CD4-positive, alpha-beta T cell (primary cell): ENCODE measurements at regions of chr17 and their contacts with region 1.

Region 1: DNA sequence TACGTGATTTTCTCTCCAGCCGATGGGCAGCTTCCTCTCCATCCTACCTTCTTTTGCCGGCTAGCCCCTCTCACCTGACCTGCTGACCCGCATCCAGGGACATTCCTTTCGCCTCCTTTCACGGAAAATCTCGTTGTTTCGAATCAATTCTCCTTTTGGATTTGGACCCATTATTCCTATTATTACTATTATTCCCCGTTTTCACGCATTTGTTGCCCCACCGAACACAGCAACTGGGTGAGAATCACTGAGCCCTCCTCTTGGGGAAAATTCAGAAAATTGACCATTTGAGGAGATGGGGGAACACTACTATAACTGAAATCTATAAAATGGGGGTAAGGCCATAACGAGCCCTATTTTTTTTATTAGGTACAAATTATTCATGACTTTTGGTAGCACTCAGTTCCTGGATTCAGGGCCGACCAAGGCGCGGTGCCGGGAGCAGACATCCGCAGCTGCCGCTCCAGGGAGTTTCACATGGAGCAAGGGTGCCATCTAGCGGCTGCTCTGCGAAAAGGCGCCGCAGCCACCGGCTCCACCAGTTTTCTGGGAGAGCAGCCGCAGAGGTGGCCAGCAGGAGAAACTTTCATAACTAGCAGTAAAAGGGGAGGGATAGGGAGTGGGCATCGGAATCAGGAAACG is 3.3 kb upstream of the HOXB8 start:
- DNase-seq: peak; percentile 68 to 91 (median 80)
- ATAC-seq: peak; percentile 75
- H3K4me3 ChIP-seq: no peak overlapping the region
- H3K4me3 Mint-ChIP-seq: peak overlapping the region; percentile 34
- H3K27ac ChIP-seq: no peak overlapping the region
- H3K27ac Mint-ChIP-seq: no peak overlapping the region
- H3K4me1 ChIP-seq: peaks cover 40% of the 10 kb centered on the region
- H3K4me1 Mint-ChIP-seq: peaks cover 44% of the 10 kb centered on the region
- H3K27me3 ChIP-seq: peaks cover 94 to 99% of the 10 kb centered on the region in 2 experiments
- H3K27me3 Mint-ChIP-seq: peaks cover 100% of the 10 kb centered on the region
- CTCF ChIP-seq: peak; percentile 99

Region 2: DNA sequence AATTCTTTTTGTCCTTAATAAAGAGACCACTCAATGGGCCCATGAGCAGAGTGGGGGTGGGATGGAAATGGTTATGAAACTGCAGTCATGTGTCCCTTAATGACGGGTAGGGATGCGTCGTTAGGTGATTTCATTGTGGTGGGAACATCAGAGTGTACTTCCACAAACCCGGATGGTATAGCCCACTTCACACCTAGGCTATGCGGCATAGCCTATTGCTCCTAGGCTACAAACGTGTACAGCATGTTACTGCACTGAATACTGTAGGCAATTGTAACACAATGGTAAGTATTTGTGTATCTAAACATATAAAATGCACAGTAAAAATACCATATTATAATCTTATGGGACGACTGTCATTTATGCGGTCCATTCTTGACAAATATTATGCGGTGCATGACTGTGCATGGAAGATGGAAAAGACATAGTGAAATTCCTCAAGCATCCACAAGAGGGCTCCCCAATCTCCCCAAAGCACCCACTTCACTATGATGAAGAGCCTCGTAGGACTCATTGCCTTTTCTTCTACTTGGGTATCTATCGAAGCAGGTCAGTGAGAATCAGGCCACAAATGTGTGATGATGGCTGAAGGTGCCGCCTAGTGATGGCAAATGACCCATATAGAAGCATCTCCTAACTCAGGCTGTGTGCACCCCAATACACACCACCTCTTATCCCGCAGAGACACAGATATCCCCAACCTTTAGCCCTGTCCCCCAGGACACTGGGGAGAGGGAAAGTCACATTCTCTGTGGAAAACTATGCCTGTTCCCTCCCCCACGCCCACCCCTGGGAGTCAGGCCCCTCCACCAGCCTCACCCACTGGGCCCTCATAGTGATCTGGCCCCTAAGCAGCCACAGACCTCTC is 841.8 kb before region 1 on chr17:
- CTCF ChIA-PET with region 1: no interaction called
- POLR2A ChIA-PET with region 1: no interaction called
- intact Hi-C with region 1: loop called in 1 of 2 experiments (anchors 5 kb)
- DNase-seq: peak in 7 of 14 experiments; percentile 12 to 74 (median 50)
- ATAC-seq: peak; percentile 89
- H3K4me3 ChIP-seq: no peak overlapping the region
- H3K4me3 Mint-ChIP-seq: no peak overlapping the region
- H3K27ac ChIP-seq: no peak overlapping the region
- H3K27ac Mint-ChIP-seq: no peak overlapping the region
- H3K4me1 ChIP-seq: peaks cover 4% of the 10 kb centered on the region
- H3K4me1 Mint-ChIP-seq: peaks cover 4% of the 10 kb centered on the region
- H3K27me3 ChIP-seq: peaks cover 19 to 27% of the 10 kb centered on the region in 2 experiments
- H3K27me3 Mint-ChIP-seq: peaks cover 69% of the 10 kb centered on the region
- CTCF ChIP-seq: peak; percentile 86

Region 3: GRCh38 chr17:47889734-47890529 is 728.4 kb before region 1 on chr17:
- CTCF ChIA-PET with region 1: no interaction called
- POLR2A ChIA-PET with region 1: no interaction called
- intact Hi-C with region 1: loop called in 1 of 2 experiments (anchors 5 kb)
- DNase-seq: peak; percentile 85 to 98 (median 92)
- ATAC-seq: peak; percentile 98
- H3K4me3 ChIP-seq: no peak overlapping the region
- H3K4me3 Mint-ChIP-seq: peak overlapping the region; percentile 72
- H3K27ac ChIP-seq: no peak overlapping the region
- H3K27ac Mint-ChIP-seq: peak overlapping the region; percentile 32
- H3K4me1 ChIP-seq: peaks cover 23% of the 10 kb centered on the region
- H3K4me1 Mint-ChIP-seq: peaks cover 32% of the 10 kb centered on the region
- H3K27me3 ChIP-seq: no peaks in the 10 kb centered on the region
- H3K27me3 Mint-ChIP-seq: no peaks in the 10 kb centered on the region
- CTCF ChIP-seq: peak; percentile 94

Region 4: GRCh38 chr17:48259694-48260291 is 358.6 kb before region 1 on chr17:
- CTCF ChIA-PET with region 1: interaction called, 11 read pairs
- POLR2A ChIA-PET with region 1: no interaction called
- intact Hi-C with region 1: no loop called
- DNase-seq: peak in 3 of 14 experiments; percentile 13 to 22 (median 21)
- ATAC-seq: no peak
- H3K4me3 ChIP-seq: no peak overlapping the region
- H3K4me3 Mint-ChIP-seq: no peak overlapping the region
- H3K27ac ChIP-seq: no peak overlapping the region
- H3K27ac Mint-ChIP-seq: no peak overlapping the region
- H3K4me1 ChIP-seq: no peaks in the 10 kb centered on the region
- H3K4me1 Mint-ChIP-seq: peaks cover 15% of the 10 kb centered on the region
- H3K27me3 ChIP-seq: no peaks in the 10 kb centered on the region
- H3K27me3 Mint-ChIP-seq: no peaks in the 10 kb centered on the region
- CTCF ChIP-seq: peak; percentile 42

Region 5: GRCh38 chr17:48472411-48473281 is 145.7 kb before region 1 on chr17:
- CTCF ChIA-PET with region 1: no interaction called
- POLR2A ChIA-PET with region 1: no interaction called
- intact Hi-C with region 1: no loop called
- DNase-seq: peak in 2 of 14 experiments; percentile 15 to 67
- ATAC-seq: no peak
- H3K4me3 ChIP-seq: no peak overlapping the region
- H3K4me3 Mint-ChIP-seq: no peak overlapping the region
- H3K27ac ChIP-seq: no peak overlapping the region
- H3K27ac Mint-ChIP-seq: no peak overlapping the region
- H3K4me1 ChIP-seq: peaks cover 6% of the 10 kb centered on the region
- H3K4me1 Mint-ChIP-seq: no peaks in the 10 kb centered on the region
- H3K27me3 ChIP-seq: no peaks in the 10 kb centered on the region
- H3K27me3 Mint-ChIP-seq: no peaks in the 10 kb centered on the region
- CTCF ChIP-seq: no peak

Region 6: DNA sequence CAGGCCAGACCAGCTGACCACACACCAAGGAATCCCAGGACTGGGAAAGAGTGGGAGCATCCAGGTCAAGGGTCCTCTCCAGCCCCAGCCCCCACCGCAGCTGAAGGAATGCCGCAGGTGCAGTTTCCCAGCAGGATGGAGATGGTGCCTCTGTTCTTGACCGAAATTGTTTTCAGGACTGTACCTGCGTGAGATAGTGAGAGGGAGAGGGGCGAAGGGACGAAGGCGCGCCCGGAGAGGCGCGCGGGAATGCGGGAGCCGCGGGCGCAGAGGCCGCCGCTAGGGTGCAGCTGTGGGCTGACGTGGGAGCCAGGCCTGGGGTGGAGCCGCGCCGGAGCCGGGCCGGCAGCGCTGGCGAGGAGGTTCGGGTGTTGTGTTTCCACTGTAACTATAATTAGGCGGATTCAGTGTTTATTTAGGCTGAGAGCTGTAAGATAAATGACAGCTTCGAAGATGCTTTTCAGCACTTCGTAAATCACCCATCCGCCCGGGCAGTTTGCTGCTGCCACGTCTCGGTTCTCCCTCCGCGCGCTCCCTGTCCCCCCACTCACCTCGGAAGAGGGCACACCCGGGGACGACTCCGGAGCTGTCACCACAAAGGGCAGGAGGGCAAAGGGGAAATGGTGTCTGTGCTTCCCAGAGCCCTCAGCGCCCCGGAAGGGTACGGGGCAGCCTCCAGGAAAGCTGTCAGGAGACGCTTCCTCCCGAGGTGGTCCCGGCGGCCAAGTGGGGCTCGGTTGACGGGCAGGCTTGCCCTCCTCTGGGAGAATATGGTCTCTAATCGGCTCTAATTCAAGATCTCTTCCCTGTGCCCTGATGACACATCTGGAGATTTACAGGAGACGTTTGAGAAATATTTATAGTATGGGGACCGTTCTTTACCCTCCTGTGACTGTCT is 125.7 kb before region 1 on chr17:
- CTCF ChIA-PET with region 1: no interaction called
- POLR2A ChIA-PET with region 1: no interaction called
- intact Hi-C with region 1: loop called in 1 of 2 experiments (anchors 1 kb)
- DNase-seq: peak; percentile 28 to 85 (median 66)
- ATAC-seq: peak; percentile 97
- H3K4me3 ChIP-seq: peak overlapping the region; percentile 59
- H3K4me3 Mint-ChIP-seq: peak overlapping the region; percentile 9
- H3K27ac ChIP-seq: no peak overlapping the region
- H3K27ac Mint-ChIP-seq: no peak overlapping the region
- H3K4me1 ChIP-seq: peaks cover 21% of the 10 kb centered on the region
- H3K4me1 Mint-ChIP-seq: peaks cover 3% of the 10 kb centered on the region
- H3K27me3 ChIP-seq: peaks cover 7 to 12% of the 10 kb centered on the region in 2 experiments
- H3K27me3 Mint-ChIP-seq: peaks cover 31% of the 10 kb centered on the region
- CTCF ChIP-seq: peak; percentile 86

Region 7: GRCh38 chr17:48636177-48637018 is 18.0 kb after region 1 on chr17:
- CTCF ChIA-PET with region 1: interaction called, 13 read pairs
- POLR2A ChIA-PET with region 1: interaction called, 3 read pairs
- intact Hi-C with region 1: no loop called
- DNase-seq: peak; percentile 45 to 82 (median 58)
- ATAC-seq: peak; percentile 83
- H3K4me3 ChIP-seq: no peak overlapping the region
- H3K4me3 Mint-ChIP-seq: no peak overlapping the region
- H3K27ac ChIP-seq: no peak overlapping the region
- H3K27ac Mint-ChIP-seq: no peak overlapping the region
- H3K4me1 ChIP-seq: peaks cover 22% of the 10 kb centered on the region
- H3K4me1 Mint-ChIP-seq: peaks cover 13% of the 10 kb centered on the region
- H3K27me3 ChIP-seq: peaks cover 85 to 97% of the 10 kb centered on the region in 2 experiments
- H3K27me3 Mint-ChIP-seq: peaks cover 98% of the 10 kb centered on the region
- CTCF ChIP-seq: peak; percentile 74

Region 8: DNA sequence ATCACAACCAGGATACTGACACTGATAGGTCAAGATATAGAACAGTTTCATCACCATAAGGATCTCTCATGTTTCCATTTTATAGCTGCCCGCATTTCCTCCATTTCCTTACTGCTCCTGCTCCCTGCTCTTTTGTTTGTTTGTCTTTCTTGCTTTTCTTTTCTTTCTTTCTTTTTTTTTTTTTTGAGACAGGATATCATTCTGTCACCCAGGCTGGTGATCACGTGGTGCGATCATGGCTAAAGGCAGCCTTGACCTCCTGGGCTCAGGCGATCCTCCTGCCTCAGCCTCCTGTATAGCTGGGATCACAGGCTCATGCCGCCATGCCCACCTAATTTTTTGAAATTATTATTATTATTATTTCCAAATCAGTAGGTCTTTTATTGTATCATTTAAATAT is 72.3 kb after region 1 on chr17:
- CTCF ChIA-PET with region 1: no interaction called
- POLR2A ChIA-PET with region 1: no interaction called
- intact Hi-C with region 1: no loop called
- DNase-seq: no peak
- ATAC-seq: no peak
- H3K4me3 ChIP-seq: no peak overlapping the region
- H3K4me3 Mint-ChIP-seq: no peak overlapping the region
- H3K27ac ChIP-seq: no peak overlapping the region
- H3K27ac Mint-ChIP-seq: no peak overlapping the region
- H3K4me1 ChIP-seq: no peaks in the 10 kb centered on the region
- H3K4me1 Mint-ChIP-seq: no peaks in the 10 kb centered on the region
- H3K27me3 ChIP-seq: peaks cover 4 to 11% of the 10 kb centered on the region in 2 experiments
- H3K27me3 Mint-ChIP-seq: peaks cover 32% of the 10 kb centered on the region
- CTCF ChIP-seq: no peak

Region 9: DNA sequence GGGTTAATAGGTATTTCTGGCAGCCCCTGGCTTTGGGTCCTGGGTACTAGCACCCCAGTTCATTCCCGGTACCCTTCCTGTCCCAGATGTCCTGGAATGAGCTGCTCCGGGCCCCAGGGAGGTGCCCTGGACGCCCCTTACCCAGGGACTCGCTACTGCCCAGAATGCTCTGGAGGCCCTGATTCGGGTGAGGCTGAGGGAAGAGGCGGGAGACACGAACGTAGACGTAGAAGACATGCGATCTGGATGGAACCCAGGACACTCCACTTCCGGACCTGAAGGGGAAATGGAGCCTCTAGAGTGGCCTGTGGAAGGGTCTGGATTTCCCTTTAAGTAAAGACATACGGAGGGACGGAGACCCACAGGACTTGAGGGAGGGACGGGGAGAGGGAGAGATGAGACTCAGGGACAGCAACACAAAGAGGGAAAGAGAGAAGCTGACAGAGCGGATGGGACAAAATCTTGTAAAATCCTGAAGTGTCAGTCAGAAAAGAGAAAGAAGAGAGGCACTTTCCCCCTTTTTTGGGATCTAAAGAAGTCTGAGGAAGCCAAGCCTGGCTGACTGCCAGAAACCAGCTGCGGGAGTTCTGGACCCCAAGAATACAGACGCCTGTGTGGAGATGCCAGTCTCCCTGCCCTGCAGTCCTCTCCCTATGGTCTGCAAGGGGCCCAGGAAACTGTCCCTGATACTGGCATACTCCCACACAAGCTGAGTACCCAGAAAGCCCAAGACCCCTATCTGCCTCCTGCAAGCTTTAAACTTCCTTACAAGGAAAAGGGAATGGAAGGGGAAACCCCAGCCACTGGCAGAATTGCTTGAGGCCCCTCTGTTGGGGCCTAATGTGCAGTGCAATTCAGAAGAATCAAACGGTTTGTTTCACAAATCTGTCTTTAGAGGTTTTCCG is 111.2 kb after region 1 on chr17:
- CTCF ChIA-PET with region 1: no interaction called
- POLR2A ChIA-PET with region 1: no interaction called
- intact Hi-C with region 1: no loop called
- DNase-seq: no peak
- ATAC-seq: no peak
- H3K4me3 ChIP-seq: no peak overlapping the region
- H3K4me3 Mint-ChIP-seq: peak overlapping the region; percentile 45
- H3K27ac ChIP-seq: no peak overlapping the region
- H3K27ac Mint-ChIP-seq: no peak overlapping the region
- H3K4me1 ChIP-seq: peaks cover 51% of the 10 kb centered on the region
- H3K4me1 Mint-ChIP-seq: peaks cover 39% of the 10 kb centered on the region
- H3K27me3 ChIP-seq: peaks cover 93 to 98% of the 10 kb centered on the region in 2 experiments
- H3K27me3 Mint-ChIP-seq: peaks cover 98% of the 10 kb centered on the region
- CTCF ChIP-seq: no peak